G401 (cell line): ENCODE measurements at regions of chr10 and their contacts with region 1.

Region 1: DNA sequence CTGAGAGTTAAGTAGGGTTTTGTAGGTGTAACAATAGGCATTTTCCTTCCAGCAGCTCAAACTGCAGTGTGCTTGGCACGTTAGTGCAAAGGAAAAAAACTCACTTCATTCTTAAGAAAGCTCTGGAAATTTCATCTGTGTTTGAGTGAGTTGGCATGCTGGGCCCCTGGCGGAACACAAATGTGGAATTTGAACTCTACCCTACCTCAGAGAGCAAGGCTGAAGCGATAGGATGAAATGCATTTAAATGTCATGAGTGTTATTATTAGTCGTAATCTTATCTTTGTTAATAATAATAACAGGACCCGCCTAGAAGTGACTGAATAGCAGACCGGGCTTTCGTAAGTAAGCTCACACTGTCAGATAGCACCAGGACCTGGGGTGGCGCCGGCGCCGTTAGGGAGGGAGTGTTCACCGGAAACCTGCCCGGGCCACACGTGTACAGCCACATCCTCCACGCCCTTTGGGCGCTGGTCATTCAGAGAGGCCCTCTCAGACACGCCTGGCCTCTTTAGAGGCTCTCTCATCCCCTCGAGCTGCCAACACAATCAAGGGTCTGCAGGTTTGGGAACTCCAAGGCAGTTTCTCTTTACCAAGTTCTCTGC is 63.5 kb downstream of the GRK5 start:
- DNase-seq: no peak

Region 2: GRCh38 chr10:119222537-119222936 is 48.3 kb before region 1 on chr10:
- in situ Hi-C with region 1: loop called (anchors 10 kb)
- DNase-seq: peak; percentile 30

Region 3: GRCh38 chr10:119416855-119417254 is 146.0 kb after region 1 on chr10:
- in situ Hi-C with region 1: no loop called
- DNase-seq: peak; percentile 50